BJ (cell line): ENCODE measurements at regions of chr2 and their contacts with region 1.

Region 1: DNA sequence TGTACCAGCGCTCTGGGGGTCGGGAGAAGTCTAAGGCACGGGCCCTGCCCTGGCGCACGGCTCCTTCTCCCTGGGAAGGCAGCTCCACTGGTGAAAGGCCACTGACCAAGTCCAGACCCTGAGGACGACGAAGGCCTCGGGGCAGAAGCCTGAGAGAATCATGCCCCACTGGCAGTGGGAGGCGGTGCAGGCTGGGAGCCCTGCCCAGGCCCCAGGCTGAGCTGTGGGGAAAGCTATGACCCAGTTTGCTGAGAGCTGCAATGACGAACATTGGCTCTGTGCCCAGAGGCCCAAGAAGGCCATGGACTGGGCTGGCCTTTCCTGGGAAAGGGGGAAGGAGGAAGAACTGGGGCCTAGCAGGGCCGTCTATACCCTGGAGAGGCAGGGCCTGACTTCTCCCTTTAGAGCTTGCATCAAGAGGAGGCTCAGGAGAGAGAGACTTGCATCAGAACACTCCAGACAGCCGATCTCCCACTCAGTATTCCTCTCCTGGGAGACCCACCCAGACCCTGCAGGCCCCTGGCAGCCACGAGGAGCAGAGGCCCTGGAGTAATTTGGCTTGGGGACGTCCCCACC is 32.9 kb downstream of the HS1BP3 start:
- DNase-seq: peak; percentile 90
- H3K4me3 ChIP-seq: no peak overlapping the region
- H3K27me3 ChIP-seq: no peaks in the 10 kb centered on the region
- CTCF ChIP-seq: peak; percentile 58

Region 2: DNA sequence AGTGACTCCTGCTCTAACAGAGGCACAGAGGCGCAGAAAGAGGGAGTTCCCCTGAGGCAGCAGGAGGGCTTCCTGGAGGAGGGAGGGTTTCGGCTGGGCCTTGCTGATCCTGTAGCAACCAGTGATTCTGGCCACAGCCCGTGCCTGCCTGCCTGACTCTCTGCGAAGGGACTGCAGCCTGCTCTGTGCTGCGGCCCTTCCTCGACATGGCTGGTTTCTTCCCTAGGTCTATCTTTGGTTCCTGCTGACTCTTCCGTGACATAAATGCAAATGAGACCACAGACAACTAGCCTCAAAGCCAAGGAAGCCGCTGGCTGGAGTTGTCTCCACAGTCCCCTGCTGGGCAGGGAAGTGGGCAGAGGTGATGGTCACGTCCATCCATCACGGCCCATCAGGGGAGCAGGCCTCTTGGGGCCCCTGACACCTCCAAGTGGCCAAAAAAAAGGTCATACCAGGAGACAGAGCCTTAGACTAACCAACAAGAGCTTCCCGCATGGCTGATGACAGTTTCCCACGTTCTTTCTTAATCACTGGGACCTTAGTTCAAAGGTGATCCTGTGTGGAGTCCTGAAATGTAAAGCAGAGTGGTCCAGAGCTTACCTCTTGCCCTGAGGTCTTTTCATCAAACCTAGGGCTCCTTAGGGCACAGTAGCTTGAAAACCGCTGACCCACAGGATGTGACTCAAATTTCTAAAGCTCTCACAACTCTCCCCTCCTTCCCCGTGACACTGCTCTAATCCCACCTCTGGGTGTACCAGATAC is 22.4 kb before region 1 on chr2:
- CTCF ChIA-PET with region 1: interaction called, 12 read pairs
- POLR2A ChIA-PET with region 1: no interaction called
- DNase-seq: no peak
- H3K4me3 ChIP-seq: no peak overlapping the region
- H3K27me3 ChIP-seq: no peaks in the 10 kb centered on the region
- CTCF ChIP-seq: no peak

Region 3: DNA sequence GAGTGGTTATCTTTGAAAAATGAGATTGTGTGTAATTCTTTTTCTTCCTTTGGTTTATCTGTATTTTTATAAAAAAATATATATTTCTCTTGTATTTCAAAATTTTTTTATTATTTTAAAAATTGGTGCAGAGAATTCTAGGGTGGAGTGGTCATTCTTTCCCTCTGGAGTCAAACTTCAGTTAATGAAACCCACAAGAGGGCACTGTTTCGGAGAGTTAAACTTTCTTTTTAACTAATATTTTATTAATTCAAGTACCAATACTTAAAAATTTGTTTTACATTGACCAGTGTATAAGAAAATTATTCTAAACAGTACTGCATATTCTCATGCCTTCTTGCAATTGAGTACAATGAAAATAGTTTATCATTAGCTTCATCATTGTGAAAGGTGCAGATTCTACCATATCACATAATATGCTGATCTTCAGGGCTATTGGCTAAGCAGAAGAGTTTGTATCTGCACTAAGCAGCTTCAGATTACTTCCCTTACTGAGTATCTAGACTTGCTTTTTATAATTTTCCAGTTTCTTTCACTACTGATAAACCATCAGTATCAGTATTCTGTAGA is 17.1 kb before region 1 on chr2:
- CTCF ChIA-PET with region 1: interaction called, 13 read pairs
- POLR2A ChIA-PET with region 1: no interaction called
- DNase-seq: no peak
- H3K4me3 ChIP-seq: no peak overlapping the region
- H3K27me3 ChIP-seq: no peaks in the 10 kb centered on the region
- CTCF ChIP-seq: peak; percentile 42